ENCODE measurements at regions of chr7 and their contacts with region 1.

Region 1: DNA sequence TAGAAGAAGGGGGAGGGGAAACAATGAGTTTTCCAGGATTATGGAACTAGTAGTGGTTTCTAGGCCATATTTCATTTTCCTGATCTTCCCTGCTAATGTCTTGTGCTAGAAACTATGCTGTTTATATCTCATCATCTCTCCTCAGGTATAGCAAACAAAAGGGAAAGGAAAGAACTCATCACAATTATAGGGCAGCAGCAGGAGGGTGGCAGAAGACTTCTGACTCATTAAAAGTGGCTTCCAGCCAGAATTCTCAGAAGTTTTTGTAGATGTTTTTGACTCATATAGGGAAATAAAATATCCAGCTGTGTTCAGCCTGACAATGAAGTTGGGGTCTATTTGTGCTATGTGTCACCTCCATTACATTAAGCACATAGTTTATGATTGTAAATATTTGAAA is 6.5 kb downstream of the AHR start:
- DNase-seq: peak; percentile 64
- H3K4me3 Mint-ChIP-seq: peak overlapping the region; percentile 21
- H3K27ac Mint-ChIP-seq: peak overlapping the region; percentile 30
- H3K4me1 Mint-ChIP-seq: peaks cover 22% of the 10 kb centered on the region
- H3K27me3 Mint-ChIP-seq: no peaks in the 10 kb centered on the region

Region 2: DNA sequence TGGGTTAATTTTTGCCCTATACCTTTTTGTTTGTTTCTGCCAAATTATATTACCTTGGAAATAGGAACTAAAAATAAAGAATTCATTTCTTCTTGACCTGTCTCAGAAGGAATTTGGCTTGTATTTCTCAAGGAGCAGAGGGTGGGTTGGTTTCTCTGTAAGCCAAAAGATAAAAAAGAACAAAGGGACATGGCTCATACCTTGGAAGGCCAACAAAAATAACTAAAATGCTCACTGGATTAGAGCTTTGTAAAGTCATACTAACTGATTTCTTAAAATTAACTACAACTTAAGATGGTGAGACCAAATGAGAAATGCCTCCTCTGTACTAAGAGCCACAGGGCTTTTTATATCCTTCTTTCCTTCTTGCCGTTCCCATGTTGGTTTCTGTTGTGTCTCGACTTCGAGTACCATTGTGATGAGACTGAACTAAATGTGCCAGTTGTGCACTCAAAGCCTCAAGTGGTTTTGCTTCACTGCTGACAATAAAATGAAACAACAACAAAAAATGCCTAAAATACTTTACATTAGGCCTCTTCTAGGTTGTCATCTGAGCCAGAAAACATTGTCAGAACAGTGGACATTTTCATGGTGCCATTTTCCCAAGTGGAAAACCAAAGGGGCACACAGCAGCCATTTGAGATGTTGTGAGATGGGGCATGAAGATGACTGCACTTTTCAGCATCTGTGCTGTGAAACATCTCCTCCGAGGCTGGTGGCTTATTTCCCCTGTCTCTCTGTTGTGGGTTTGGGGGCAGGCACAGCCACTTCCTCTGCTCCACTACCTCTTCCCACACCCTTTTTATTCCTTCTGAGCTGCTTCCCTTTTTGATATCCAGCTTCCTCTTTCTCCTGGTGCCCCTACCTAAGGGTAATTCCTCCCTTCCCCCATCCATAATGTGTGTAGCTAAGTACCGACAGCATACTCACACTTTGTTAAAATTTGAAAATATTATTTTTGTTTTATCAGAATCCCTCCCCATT is 371.3 kb before region 1 on chr7:
- intact Hi-C with region 1: loop called (anchors 5 kb)
- DNase-seq: peak; percentile 74
- H3K4me3 Mint-ChIP-seq: peak overlapping the region; percentile 32
- H3K27ac Mint-ChIP-seq: peak overlapping the region; percentile 68
- H3K4me1 Mint-ChIP-seq: peaks cover 51% of the 10 kb centered on the region
- H3K27me3 Mint-ChIP-seq: no peaks in the 10 kb centered on the region

Measured in activated CD4-positive, alpha-beta T cell treated with anti-CD3 and anti-CD28 coated beads, Interleukin-2, amount 10 ng/mL, durations not matched to agents 24 days and 14 days (primary cell).